Left ventricle myocardium inferior (tissue), 1 donor: ENCODE measurements at regions of chr22 and their contacts with region 1.

Region 1: DNA sequence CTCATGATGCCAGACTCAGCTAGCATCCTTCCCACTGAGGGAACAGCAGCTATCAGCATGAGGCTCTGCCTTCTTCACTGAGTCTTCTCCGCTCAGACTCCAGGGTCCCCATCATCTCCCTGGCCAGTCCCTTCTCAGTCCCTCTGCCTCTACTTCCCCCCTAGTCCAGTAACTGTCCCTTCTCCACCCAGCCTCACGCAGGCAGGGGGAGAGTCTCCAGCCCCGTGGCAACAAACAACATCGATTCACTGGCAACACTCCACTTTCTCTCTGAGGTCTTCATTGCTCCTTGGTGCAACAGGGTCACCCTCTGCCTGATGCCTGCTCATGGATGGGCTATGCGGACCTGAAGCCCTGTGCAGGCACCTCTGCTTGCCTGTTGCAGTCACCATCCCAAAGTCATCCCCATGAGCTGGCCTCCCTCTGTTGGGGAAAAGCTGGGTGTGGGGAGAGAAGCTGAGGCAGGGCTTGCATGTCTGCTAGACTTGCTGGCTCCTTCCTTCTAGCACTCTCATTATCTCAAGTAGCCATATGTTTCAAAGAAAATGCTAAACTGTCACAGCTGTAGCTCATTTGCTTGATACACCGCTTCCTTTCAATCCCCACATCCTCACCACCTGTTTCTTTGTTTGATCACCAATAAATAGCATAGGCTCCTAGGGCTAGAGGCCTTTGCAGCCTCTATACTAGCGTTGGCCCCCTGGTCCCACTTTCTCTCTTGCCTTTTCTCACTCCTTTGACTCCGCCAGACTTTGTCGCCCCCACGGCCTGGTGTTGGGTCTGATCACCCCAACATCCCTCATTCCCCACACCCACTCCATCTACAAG is 4.3 kb upstream of the BCR start:
- DNase-seq: no peak
- H3K4me3 ChIP-seq: no peak overlapping the region
- H3K27ac ChIP-seq: no peak overlapping the region
- H3K4me1 ChIP-seq: peaks cover 17% of the 10 kb centered on the region
- H3K27me3 ChIP-seq: no peaks in the 10 kb centered on the region
- CTCF ChIP-seq: no peak

Region 2: GRCh38 chr22:23119494-23120414 is 56.3 kb before region 1 on chr22:
- intact Hi-C with region 1: no loop called
- DNase-seq: no peak
- H3K4me3 ChIP-seq: no peak overlapping the region
- H3K27ac ChIP-seq: no peak overlapping the region
- H3K4me1 ChIP-seq: peaks cover 4% of the 10 kb centered on the region
- H3K27me3 ChIP-seq: no peaks in the 10 kb centered on the region
- CTCF ChIP-seq: no peak

Region 3: DNA sequence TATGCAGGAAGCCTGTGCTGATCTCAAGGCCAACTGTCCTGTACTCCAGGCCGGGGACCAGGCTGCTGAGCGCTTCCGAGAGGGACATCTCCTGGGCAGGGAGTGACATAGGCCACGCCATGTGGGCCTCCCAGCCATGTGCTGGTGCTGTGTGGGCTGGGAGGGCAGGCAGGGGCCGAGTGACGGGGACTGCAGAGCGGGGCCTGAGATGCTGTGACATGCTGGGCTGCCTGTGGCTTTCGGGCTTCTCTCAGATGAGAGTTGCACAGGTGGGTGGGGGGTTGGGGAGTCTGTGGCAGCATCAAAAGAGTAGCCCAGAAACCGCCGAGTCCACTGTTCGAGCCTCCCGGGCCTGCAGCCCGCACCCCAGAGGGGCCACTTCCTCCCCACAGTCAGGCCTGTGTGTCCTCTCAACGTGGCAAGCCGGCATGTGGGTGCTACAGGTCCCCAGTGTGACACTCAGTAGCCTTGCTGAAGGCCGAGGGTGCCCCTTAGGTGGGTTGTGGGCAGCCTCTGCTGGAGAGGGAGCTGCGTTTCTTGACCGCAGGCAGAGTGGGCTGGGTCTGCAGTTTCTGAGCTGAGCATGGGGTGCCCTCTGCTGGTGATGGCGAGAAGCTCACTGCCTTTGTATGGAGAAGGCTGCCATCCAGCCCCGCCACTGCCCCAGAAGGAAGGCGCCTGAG is 105.5 kb after region 1 on chr22:
- intact Hi-C with region 1: loop called (anchors 2 kb)
- DNase-seq: peak; percentile 82
- H3K4me3 ChIP-seq: no peak overlapping the region
- H3K27ac ChIP-seq: peak overlapping the region; percentile 52
- H3K4me1 ChIP-seq: peaks cover 34% of the 10 kb centered on the region
- H3K27me3 ChIP-seq: no peaks in the 10 kb centered on the region
- CTCF ChIP-seq: peak; percentile 97

Region 4: DNA sequence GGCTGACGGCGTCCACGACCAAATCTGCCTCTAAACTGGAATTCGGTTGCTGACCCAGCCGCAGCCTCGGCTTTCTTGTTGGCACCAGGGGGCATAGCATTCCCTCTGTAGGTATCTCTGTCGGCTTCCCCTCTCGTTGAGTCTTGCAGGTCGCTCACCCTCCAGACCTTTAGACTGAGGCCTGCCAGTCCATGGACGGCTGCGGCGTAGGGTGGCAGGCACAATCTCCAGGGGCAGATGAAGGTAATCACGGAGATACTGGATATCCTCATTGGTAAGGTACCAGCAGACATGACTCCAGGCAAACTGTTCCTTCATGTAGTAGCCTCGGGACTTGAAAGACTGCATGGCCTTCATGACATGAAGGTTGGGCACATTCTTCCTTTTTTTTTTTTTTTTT is 146.5 kb after region 1 on chr22:
- intact Hi-C with region 1: no loop called
- DNase-seq: no peak
- H3K4me3 ChIP-seq: no peak overlapping the region
- H3K27ac ChIP-seq: no peak overlapping the region
- H3K4me1 ChIP-seq: no peaks in the 10 kb centered on the region
- H3K27me3 ChIP-seq: peaks cover 6% of the 10 kb centered on the region
- CTCF ChIP-seq: no peak

Region 5: GRCh38 chr22:23365961-23366360 is 189.9 kb after region 1 on chr22:
- intact Hi-C with region 1: no loop called
- DNase-seq: no peak
- H3K4me3 ChIP-seq: no peak overlapping the region
- H3K27ac ChIP-seq: no peak overlapping the region
- H3K4me1 ChIP-seq: no peaks in the 10 kb centered on the region
- H3K27me3 ChIP-seq: peaks cover 74% of the 10 kb centered on the region
- CTCF ChIP-seq: no peak